ENCODE measurements at regions of chr9 and their contacts with region 1.

Region 1: DNA sequence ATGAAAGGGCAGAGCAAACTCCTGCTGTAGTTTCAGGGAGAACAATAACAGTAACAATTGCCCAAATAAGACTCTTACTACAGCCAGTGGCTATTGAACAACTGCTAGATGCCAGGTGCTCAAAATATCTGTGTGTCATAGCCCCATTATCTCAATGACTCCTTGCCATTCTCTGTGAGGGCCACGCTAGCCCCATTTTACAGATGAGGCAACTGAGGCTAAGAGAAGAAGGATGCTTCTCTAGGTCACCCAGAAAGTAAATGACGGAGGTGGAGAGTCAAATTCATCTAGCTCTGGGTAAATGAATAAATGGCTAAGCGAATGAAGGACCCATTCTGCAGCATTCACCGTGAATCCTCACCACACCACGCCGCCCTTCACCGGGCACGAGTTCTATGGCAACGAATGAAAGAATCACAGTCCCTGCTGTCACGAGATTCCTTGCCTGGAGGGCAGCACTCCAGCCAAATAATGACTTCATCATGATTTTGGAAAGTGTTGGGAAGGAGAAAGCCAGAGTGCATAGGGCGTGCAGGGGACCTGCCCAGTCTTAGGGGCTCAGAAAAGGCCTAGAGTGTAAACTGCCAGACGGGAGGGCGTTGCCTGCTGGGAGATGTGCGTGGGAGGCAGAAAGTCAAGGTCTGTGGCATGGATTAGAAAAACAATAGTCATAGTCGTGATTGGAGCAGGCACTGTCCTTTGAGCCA is 147.2 kb downstream of the C9orf50 start:
- DNase-seq: peak; percentile 29 to 37
- ATAC-seq: peak; percentile 39 to 77 (median 62)
- H3K4me3 ChIP-seq: no peak overlapping the region
- H3K27ac ChIP-seq: peak overlapping the region in 3 of 10 donors; percentile 12 to 34 (median 20)
- H3K4me1 ChIP-seq: peaks cover 5 to 32% (median 12%) of the 10 kb centered on the region in 9 donors
- H3K27me3 ChIP-seq: no peaks in the 10 kb centered on the region
- CTCF ChIP-seq: no peak

Region 2: GRCh38 chr9:129198319-129199011 is 275.2 kb before region 1 on chr9:
- intact Hi-C with region 1: loop called in 1 of 10 experiments (anchors 10 kb)
- DNase-seq: peak; percentile 54 to 67
- ATAC-seq: peak in 7 of 8 donors; percentile 30 to 70 (median 52)
- H3K4me3 ChIP-seq: peak overlapping the region in 2 of 10 donors; percentile 12 to 14
- H3K27ac ChIP-seq: peak overlapping the region; percentile 63 to 87 (median 78)
- H3K4me1 ChIP-seq: peaks cover 0 to 24% (median 9%) of the 10 kb centered on the region in 9 donors
- H3K27me3 ChIP-seq: peaks cover 0 to 20% (median 9%) of the 10 kb centered on the region in 7 donors
- CTCF ChIP-seq: peak in 2 of 9 donors; percentile 8 to 11